GM12878 (cell line): ENCODE measurements at regions of chr3 and their contacts with region 1.

Region 1: GRCh38 chr3:65672871-65673815 is 365.6 kb downstream of the MAGI1 start:
- DNase-seq: no peak
- ATAC-seq: peak; percentile 74
- H3K4me3 ChIP-seq: no peak overlapping the region
- H3K27ac ChIP-seq: no peak overlapping the region
- H3K4me1 ChIP-seq: no peaks in the 10 kb centered on the region
- H3K27me3 ChIP-seq: no peaks in the 10 kb centered on the region
- CTCF ChIP-seq: peak; percentile 59 to 76 (median 76)
- EP300 ChIP-seq: no peak
- POLR2A ChIP-seq: no peak
- RAD21 ChIP-seq: peak; percentile 56

Region 2: GRCh38 chr3:65342084-65342683 is 331.0 kb before region 1 on chr3:
- CTCF ChIA-PET with region 1: interaction called, 4 read pairs
- POLR2A ChIA-PET with region 1: no interaction called
- RAD21 ChIA-PET with region 1: no interaction called
- SMC1A ChIA-PET with region 1: no interaction called
- in situ Hi-C with region 1: no loop called
- intact Hi-C with region 1: loop called (anchors 2 kb)
- DNase-seq: no peak
- ATAC-seq: peak; percentile 92
- H3K4me3 ChIP-seq: no peak overlapping the region
- H3K27ac ChIP-seq: no peak overlapping the region
- H3K4me1 ChIP-seq: no peaks in the 10 kb centered on the region
- H3K27me3 ChIP-seq: no peaks in the 10 kb centered on the region
- CTCF ChIP-seq: peak; percentile 59 to 75 (median 63)
- EP300 ChIP-seq: no peak
- POLR2A ChIP-seq: no peak
- RAD21 ChIP-seq: peak; percentile 36; the same call in 1 of the 2 replicates

Region 3: DNA sequence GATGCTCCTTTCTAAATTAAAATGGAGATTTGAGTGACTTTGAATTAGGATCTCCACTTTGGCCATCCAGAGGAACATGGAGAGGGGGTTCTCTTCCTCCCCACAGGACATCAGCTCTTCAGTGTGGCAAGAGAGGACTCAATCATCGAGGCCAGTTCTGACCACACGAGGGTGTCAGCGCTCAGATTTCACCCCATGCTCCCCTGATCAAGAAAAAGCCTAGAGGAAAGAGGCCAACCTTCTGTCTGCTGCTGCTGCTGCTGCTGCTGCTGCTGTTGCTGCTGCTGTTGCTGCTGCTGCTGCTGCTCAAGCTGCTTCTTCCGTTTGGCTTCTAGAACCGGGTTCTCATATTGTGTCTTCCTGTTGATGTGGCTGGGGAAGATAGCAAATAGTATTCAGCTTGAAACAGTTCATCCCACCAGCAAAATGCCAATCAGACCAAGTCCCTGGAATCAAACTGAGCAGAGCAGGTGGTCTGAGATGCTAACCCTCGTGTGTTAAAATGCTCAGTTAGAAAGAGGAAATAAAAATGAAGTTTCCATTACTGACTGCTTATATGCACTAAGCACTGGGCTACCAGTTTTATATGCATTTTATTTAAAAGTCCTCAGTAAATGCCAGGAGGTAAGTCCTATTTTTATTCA is 233.4 kb before region 1 on chr3:
- CTCF ChIA-PET with region 1: interaction called, 4 read pairs
- POLR2A ChIA-PET with region 1: no interaction called
- RAD21 ChIA-PET with region 1: no interaction called
- SMC1A ChIA-PET with region 1: no interaction called
- in situ Hi-C with region 1: no loop called
- intact Hi-C with region 1: loop called (anchors 1 kb)
- DNase-seq: no peak
- ATAC-seq: peak; percentile 76
- H3K4me3 ChIP-seq: no peak overlapping the region
- H3K27ac ChIP-seq: no peak overlapping the region
- H3K4me1 ChIP-seq: no peaks in the 10 kb centered on the region
- H3K27me3 ChIP-seq: no peaks in the 10 kb centered on the region
- CTCF ChIP-seq: peak in 1 of 3 experiments; percentile 21; a peak in 1 of 6 replicates
- EP300 ChIP-seq: no peak
- POLR2A ChIP-seq: no peak
- RAD21 ChIP-seq: 0 out of 2 replicates have a peak, but pooled peaks have one; percentile 14

Region 4: GRCh38 chr3:65685621-65686235 is 12.6 kb after region 1 on chr3:
- CTCF ChIA-PET with region 1: interaction called, 19 read pairs
- POLR2A ChIA-PET with region 1: no interaction called
- RAD21 ChIA-PET with region 1: interaction called, 3 read pairs
- SMC1A ChIA-PET with region 1: no interaction called
- in situ Hi-C with region 1: no loop called
- intact Hi-C with region 1: no loop called
- DNase-seq: no peak
- ATAC-seq: no peak
- H3K4me3 ChIP-seq: no peak overlapping the region
- H3K27ac ChIP-seq: no peak overlapping the region
- H3K4me1 ChIP-seq: no peaks in the 10 kb centered on the region
- H3K27me3 ChIP-seq: no peaks in the 10 kb centered on the region
- CTCF ChIP-seq: no peak
- EP300 ChIP-seq: no peak
- POLR2A ChIP-seq: no peak
- RAD21 ChIP-seq: no peak